ENCODE measurements at regions of chr4 and their contacts with region 1.

Region 1: GRCh38 chr4:108492816-108493595 is 127.4 kb upstream of the RPL34 start:
- DNase-seq: peak; percentile 65
- H3K4me3 Mint-ChIP-seq: no peak overlapping the region
- H3K27ac Mint-ChIP-seq: no peak overlapping the region
- H3K4me1 Mint-ChIP-seq: no peaks in the 10 kb centered on the region
- H3K27me3 Mint-ChIP-seq: no peaks in the 10 kb centered on the region
- CTCF ChIP-seq: peak; percentile 74

Region 2: GRCh38 chr4:108018040-108018883 is 474.7 kb before region 1 on chr4:
- CTCF ChIA-PET with region 1: interaction called, 5 read pairs
- POLR2A ChIA-PET with region 1: no interaction called
- intact Hi-C with region 1: loop called (anchors 1 kb)
- DNase-seq: peak; percentile 82
- H3K4me3 Mint-ChIP-seq: no peak overlapping the region
- H3K27ac Mint-ChIP-seq: peak overlapping the region; percentile 39
- H3K4me1 Mint-ChIP-seq: no peaks in the 10 kb centered on the region
- H3K27me3 Mint-ChIP-seq: no peaks in the 10 kb centered on the region
- CTCF ChIP-seq: peak; percentile 72

Region 3: DNA sequence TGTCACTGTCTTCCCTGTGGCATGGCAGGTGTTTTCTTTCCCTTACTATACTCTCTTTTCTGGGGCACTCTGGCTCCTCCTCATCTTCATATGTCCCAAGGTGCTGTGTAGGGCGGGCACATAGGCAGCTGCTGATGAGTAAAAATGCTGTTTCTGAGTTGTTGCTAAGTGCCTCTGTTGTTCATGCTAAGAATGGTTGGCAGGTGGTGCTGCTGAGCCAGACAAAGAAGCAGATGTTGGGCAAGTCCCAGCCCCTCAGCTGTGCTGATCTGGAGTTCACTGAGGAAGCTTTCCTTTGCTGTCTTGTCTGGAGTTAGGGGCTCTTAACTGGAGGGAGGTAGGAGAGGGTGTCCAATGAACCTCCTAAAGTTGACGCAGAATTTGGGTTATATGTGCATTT is 462.7 kb before region 1 on chr4:
- CTCF ChIA-PET with region 1: interaction called, 4 read pairs
- POLR2A ChIA-PET with region 1: interaction called, 4 read pairs
- intact Hi-C with region 1: loop called (anchors 1 kb)
- DNase-seq: peak; percentile 51
- H3K4me3 Mint-ChIP-seq: no peak overlapping the region
- H3K27ac Mint-ChIP-seq: peak overlapping the region; percentile 0
- H3K4me1 Mint-ChIP-seq: no peaks in the 10 kb centered on the region
- H3K27me3 Mint-ChIP-seq: no peaks in the 10 kb centered on the region
- CTCF ChIP-seq: peak; percentile 32